Mammary epithelial cell (primary cell): ENCODE measurements at regions of chr16 and their contacts with region 1.

Region 1: DNA sequence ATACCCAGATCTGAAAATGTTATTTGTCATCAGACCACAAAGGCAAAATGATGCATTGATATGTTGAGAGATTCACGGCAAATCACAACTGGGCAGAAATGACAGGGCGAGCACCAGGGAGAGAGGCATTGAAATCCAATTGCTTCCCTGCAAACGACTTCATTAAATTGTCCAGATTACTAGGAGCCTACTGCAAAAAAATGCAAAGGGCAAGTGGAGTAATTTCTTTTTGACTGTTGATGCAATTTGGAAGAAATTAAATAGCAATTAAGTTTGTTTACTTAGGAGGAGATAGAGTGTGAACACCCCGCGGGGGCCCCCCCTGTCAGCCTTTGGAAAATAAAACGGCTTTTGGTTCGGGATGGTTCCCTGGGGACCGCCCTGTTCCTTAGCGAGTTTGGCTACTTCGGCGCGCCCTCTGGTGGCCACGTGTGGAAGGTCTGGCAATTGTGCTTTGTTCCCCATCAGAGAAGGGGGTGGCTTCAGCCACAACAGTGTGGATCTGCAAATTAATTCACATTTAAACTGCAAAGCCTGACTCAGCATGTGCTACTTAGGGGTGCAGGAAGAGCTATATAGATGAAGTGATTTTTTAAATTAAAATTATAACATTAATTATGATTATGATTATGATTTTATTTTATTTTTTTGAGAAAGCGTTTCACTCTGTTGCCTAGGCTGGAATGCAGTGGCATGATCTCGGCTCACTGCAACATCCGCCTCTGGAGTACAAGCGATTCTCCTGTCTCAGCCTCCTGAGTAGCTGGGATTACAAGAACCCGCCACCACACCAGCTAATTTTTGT is 14.5 kb upstream of the TMC7 start:
- DNase-seq: peak; percentile 56
- H3K4me3 ChIP-seq: peak overlapping the region; percentile 16 to 20 (median 19)
- H3K27ac ChIP-seq: no peak overlapping the region
- H3K4me1 ChIP-seq: peaks cover 4% of the 10 kb centered on the region
- H3K27me3 ChIP-seq: no peaks in the 10 kb centered on the region
- CTCF ChIP-seq: peak; percentile 78 to 95

Region 2: GRCh38 chr16:18801197-18801972 is 167.9 kb before region 1 on chr16 and contains the start of gene ARL6IP1:
- CTCF ChIA-PET with region 1: no interaction called
- dilution Hi-C with region 1: loop called (anchors 5 kb)
- in situ Hi-C with region 1: no loop called
- intact Hi-C with region 1: loop called (anchors 2 kb)
- DNase-seq: peak; percentile 99
- H3K4me3 ChIP-seq: peak within 1 kb of the TSS; percentile 83 to 97 (median 95)
- H3K27ac ChIP-seq: peak within 1 kb of the TSS; percentile 85
- H3K4me1 ChIP-seq: peaks cover 42% of the 10 kb centered on the region
- H3K27me3 ChIP-seq: no peaks in the 10 kb centered on the region
- CTCF ChIP-seq: peak; percentile 62 to 94
- total RNA-seq, gene ARL6IP1: 88.7 to 236 TPM

Region 3: GRCh38 chr16:18809165-18809564 is 160.1 kb before region 1 on chr16:
- CTCF ChIA-PET with region 1: no interaction called
- dilution Hi-C with region 1: loop called (anchors 5 kb)
- in situ Hi-C with region 1: no loop called
- intact Hi-C with region 1: no loop called
- DNase-seq: no peak
- H3K4me3 ChIP-seq: no peak overlapping the region
- H3K27ac ChIP-seq: no peak overlapping the region
- H3K4me1 ChIP-seq: peaks cover 8% of the 10 kb centered on the region
- H3K27me3 ChIP-seq: no peaks in the 10 kb centered on the region
- CTCF ChIP-seq: no peak

Region 4: GRCh38 chr16:18932243-18932981 is 36.8 kb before region 1 on chr16:
- CTCF ChIA-PET with region 1: no interaction called
- dilution Hi-C with region 1: loop called (anchors 5 kb)
- in situ Hi-C with region 1: no loop called
- intact Hi-C with region 1: no loop called
- DNase-seq: peak; percentile 35
- H3K4me3 ChIP-seq: no peak overlapping the region
- H3K27ac ChIP-seq: no peak overlapping the region
- H3K4me1 ChIP-seq: peaks cover 3% of the 10 kb centered on the region
- H3K27me3 ChIP-seq: no peaks in the 10 kb centered on the region
- CTCF ChIP-seq: no peak

Region 5: GRCh38 chr16:19005561-19006445 is 36.6 kb after region 1 on chr16:
- CTCF ChIA-PET with region 1: no interaction called
- dilution Hi-C with region 1: loop called (anchors 5 kb)
- in situ Hi-C with region 1: no loop called
- intact Hi-C with region 1: no loop called
- DNase-seq: peak; percentile 99
- H3K4me3 ChIP-seq: no peak overlapping the region
- H3K27ac ChIP-seq: peak overlapping the region; percentile 97
- H3K4me1 ChIP-seq: peaks cover 64% of the 10 kb centered on the region
- H3K27me3 ChIP-seq: no peaks in the 10 kb centered on the region
- CTCF ChIP-seq: no peak